ENCODE measurements at regions of chr1 and their contacts with region 1.

Region 1: DNA sequence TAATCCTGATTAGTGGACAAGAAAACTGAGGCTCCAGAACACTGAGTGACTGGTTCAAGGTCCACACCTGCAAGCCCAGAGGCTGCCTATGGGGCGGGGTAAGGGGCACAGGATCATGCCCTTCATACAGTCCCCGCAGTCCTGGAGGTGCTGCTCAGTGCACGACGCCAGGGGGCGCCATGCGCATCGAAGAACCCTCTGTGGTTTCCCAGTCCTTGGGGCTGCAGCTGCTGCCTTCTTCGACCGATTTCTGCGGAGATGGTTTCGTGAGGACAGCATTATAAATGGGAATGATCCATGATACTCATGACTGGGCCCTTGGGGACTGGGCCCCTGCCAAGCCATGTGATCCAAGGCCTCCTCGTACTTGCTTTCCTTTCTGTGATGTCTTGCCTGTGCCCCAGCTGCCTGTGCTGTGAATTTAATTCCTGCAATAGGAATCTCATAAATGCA is 37.1 kb upstream of the ARHGEF10L start:
- DNase-seq: peak; percentile 70 to 86 (median 78)
- H3K4me3 ChIP-seq: no peak overlapping the region
- H3K27ac ChIP-seq: no peak overlapping the region
- H3K4me1 ChIP-seq: no peaks in the 10 kb centered on the region
- H3K27me3 ChIP-seq: peaks cover 0 to 5% (median 0%) of the 10 kb centered on the region in 5 experiments

Region 2: DNA sequence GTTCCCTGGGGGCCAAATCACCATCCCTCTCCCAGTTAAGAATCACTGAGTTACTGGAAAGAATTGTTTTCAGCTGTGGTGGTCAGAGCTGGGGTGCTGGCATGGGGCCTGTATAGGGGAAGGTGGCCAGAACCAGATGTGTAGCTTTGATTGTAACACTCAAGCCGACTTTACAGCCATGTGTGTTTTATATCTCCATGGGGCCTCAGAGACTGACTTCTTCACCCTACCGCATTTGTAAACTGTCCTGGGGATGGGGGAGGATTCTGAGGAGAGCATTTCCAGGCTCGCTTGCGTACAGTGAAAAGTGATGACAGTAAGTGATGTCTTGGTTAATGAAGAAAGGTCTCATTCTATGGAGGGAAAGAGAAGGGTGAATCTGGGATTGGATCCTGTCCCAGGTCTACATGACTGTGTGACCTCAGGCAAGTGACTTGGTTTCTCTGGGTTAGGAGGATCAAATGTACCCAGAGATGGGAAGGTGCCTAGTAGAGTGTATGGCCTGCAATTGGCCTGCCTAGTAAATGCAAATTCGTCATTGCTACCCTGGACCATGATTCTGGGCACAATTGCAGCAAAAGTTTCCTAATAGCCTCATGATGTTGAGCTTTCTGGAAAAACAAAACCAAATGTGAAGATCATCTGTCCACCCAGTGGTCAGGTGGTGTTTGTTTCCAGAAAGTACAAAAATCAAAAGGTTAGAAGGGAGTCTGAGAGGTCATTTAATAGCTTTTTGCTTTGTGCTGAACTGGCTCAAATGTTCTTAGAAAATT is 13.2 kb before region 1 on chr1:
- CTCF ChIA-PET with region 1: interaction called, 10 read pairs
- POLR2A ChIA-PET with region 1: no interaction called
- DNase-seq: no peak
- H3K4me3 ChIP-seq: no peak overlapping the region
- H3K27ac ChIP-seq: no peak overlapping the region
- H3K4me1 ChIP-seq: no peaks in the 10 kb centered on the region
- H3K27me3 ChIP-seq: peaks cover 0 to 1% (median 0%) of the 10 kb centered on the region in 5 experiments

Region 3: GRCh38 chr1:17687145-17687544 is 184.8 kb after region 1 on chr1:
- CTCF ChIA-PET with region 1: no interaction called
- POLR2A ChIA-PET with region 1: no interaction called
- DNase-seq: no peak
- H3K4me3 ChIP-seq: no peak overlapping the region
- H3K27ac ChIP-seq: no peak overlapping the region
- H3K4me1 ChIP-seq: peaks cover 0 to 5% (median 1%) of the 10 kb centered on the region in 4 experiments
- H3K27me3 ChIP-seq: peaks cover 0 to 6% (median 0%) of the 10 kb centered on the region in 5 experiments